ENCODE measurements at regions of chr3 and their contacts with region 1.

Region 1: DNA sequence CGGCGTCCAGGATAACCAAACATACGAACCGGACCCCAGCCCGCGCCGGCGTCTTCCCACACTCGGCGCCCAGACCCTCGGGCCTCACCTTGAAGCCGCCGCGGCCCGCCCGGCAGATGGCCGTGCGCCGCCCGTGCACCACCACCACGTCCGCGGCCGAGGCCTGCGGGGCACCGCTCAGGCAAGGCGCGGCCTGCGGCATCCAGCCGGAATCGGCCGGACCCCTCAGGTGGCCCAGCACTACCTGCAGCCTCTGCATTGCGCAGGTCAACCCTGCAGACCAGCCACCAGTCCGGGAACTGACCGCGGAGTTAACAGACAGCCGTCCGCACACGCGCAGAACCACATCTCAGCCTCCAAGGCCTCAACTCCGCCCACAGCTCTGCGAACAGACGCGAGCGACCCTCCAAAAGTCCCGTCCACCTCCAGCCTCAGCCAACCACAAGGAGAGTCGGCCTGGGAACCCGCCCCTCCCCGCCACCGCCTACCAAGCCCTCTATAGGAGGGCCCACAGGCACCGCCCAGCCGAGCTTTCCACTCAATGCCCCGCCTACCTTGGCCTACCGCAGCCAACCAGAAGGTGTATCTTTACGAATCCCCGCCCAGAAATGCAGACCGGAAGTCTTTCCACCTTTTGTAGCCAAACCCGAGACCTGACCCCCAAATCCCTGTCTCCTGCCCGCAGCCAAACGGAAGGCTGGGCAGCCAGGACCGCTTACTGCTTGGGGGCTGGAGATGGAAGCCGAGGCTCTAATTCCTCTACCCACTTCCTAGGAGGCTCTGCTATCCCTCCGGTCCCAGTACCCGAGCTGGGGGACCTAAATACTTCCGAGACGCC is at the start of gene ACAA1:
- DNase-seq: peak; percentile 97
- ATAC-seq: peak; percentile 81
- H3K4me3 ChIP-seq: peak within 1 kb of the TSS; percentile 85 to 96 (median 89)
- H3K27ac ChIP-seq: peak within 1 kb of the TSS; percentile 97
- H3K4me1 ChIP-seq: peaks cover 57% of the 10 kb centered on the region
- H3K27me3 ChIP-seq: no peaks in the 10 kb centered on the region; a peak in 1 of 5 replicates
- CTCF ChIP-seq: no peak
- EP300 ChIP-seq: no peak
- POLR2A ChIP-seq: peak in 1 of 2 experiments; percentile 94; a peak in 2 of 4 replicates
- RAD21 ChIP-seq: peak; percentile 46
- total RNA-seq, gene ACAA1: 60.8 and 107 TPM in 2 replicates

Region 2: DNA sequence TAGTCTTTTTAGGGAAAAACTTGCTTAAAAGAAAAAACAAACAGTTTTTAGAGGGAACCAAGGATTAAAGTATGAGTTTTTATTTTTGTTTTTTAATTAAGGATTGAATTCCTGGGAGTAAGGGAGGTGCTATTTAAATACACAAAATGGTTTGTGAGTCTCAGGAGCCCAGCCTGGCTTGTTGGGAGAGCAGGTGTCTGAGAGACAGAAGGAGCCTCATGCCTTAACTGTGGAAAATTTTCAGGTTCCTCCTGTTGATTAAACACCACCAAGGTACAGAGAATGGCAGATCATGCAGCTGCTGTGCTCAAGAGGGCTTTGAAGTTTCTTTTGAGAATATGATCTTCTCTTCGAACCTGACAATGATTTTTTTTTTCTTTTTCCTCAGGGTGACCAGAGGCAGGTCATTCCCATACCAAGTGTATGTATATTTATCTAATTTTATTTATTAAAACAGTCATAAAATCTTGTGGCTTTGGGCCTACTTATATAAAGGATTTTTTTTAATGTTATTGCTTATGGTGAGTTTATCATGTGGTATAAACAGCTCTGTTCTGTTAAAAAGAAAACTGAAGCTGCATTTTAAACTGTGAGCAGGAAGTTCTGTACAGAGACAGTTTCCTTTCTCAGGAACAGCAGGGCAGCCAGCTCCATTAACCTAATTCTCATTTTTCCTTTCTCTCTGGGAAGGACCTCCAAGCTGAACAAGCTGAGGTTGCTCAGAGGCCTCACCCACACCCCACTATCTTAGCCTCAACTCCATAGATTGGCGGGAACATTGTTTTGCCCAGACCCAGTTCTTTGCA is 180.1 kb before region 1 on chr3:
- CTCF ChIA-PET with region 1: no interaction called
- POLR2A ChIA-PET with region 1: no interaction called
- in situ Hi-C with region 1: no loop called
- intact Hi-C with region 1: no loop called
- DNase-seq: no peak
- ATAC-seq: no peak
- H3K4me3 ChIP-seq: no peak overlapping the region
- H3K27ac ChIP-seq: no peak overlapping the region
- H3K4me1 ChIP-seq: peaks cover 8% of the 10 kb centered on the region
- H3K27me3 ChIP-seq: no peaks in the 10 kb centered on the region
- CTCF ChIP-seq: no peak
- EP300 ChIP-seq: no peak
- POLR2A ChIP-seq: no peak
- RAD21 ChIP-seq: no peak

Region 3: DNA sequence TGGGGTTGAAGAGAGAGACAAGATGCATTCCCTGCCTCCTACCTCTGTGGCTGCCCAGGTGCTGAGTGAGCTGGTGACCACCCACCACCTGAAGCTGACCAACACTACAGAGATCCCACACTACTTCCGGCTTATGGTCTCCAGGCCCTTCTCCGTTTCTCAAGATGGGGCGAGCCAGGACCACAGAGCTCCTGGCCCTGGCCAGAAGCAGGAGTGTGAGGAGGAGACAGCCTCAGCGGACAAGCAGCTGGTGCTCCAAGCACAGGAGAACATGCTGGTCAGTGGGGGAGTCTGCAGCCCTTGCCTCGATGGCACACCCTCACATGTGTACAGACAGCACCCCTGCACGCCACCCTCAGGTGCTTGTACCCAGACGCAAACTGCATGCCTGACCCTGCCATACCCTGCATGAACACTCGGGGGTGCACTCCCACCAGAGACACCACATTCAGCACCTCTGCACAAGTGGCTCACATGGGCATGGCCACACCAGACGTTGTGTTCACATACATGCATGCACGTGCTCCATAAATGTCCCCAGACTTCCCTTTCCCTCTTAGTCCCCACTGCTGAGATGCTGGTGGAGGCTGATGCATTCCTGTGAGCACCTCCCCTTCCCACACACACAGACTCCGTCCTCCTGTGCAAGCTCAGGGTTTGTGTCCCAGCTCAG is 19.1 kb before region 1 on chr3:
- CTCF ChIA-PET with region 1: no interaction called
- POLR2A ChIA-PET with region 1: interaction called, 87 read pairs
- in situ Hi-C with region 1: no loop called
- intact Hi-C with region 1: loop called (anchors 2 kb)
- DNase-seq: peak; percentile 65
- ATAC-seq: peak; percentile 53
- H3K4me3 ChIP-seq: no peak overlapping the region
- H3K27ac ChIP-seq: peak overlapping the region; percentile 14
- H3K4me1 ChIP-seq: peaks cover 18% of the 10 kb centered on the region; the same call in 1 of the 2 replicates
- H3K27me3 ChIP-seq: peaks cover 0 to 8% of the 10 kb centered on the region in 2 experiments; a peak in 1 of 5 replicates
- CTCF ChIP-seq: peak; percentile 98
- EP300 ChIP-seq: no peak
- POLR2A ChIP-seq: peak; percentile 44 to 76; a peak in 3 of 4 replicates
- RAD21 ChIP-seq: peak; percentile 94

Region 4: GRCh38 chr3:38164966-38165680 is 28.1 kb after region 1 on chr3 and contains the start of gene OXSR1:
- CTCF ChIA-PET with region 1: no interaction called
- POLR2A ChIA-PET with region 1: interaction called, 179 read pairs
- in situ Hi-C with region 1: no loop called
- intact Hi-C with region 1: loop called (anchors 2 kb)
- DNase-seq: peak; percentile 99
- ATAC-seq: peak; percentile 93
- H3K4me3 ChIP-seq: peak within 1 kb of the TSS; percentile 86 to 97 (median 90)
- H3K27ac ChIP-seq: peak within 1 kb of the TSS; percentile 96
- H3K4me1 ChIP-seq: peaks cover 48% of the 10 kb centered on the region
- H3K27me3 ChIP-seq: no peaks in the 10 kb centered on the region; a peak in 1 of 5 replicates
- CTCF ChIP-seq: 0 out of 2 replicates have a peak, but pooled peaks have one; percentile 0
- EP300 ChIP-seq: no peak; a peak in 1 of 4 replicates
- POLR2A ChIP-seq: peak; percentile 82 to 89
- RAD21 ChIP-seq: 0 out of 2 replicates have a peak, but pooled peaks have one; percentile 8
- total RNA-seq, gene OXSR1: 32.6 and 41.1 TPM in 2 replicates

Region 5: GRCh38 chr3:38281895-38282675 is 145.1 kb after region 1 on chr3 and contains the start of gene SLC22A14:
- CTCF ChIA-PET with region 1: no interaction called
- POLR2A ChIA-PET with region 1: interaction called, 3 read pairs
- in situ Hi-C with region 1: no loop called
- intact Hi-C with region 1: loop called (anchors 1 kb)
- DNase-seq: peak; percentile 16
- ATAC-seq: peak; percentile 89
- H3K4me3 ChIP-seq: no peak within 1 kb of the TSS
- H3K27ac ChIP-seq: no peak within 1 kb of the TSS
- H3K4me1 ChIP-seq: no peaks in the 10 kb centered on the region
- H3K27me3 ChIP-seq: peaks cover 0 to 19% of the 10 kb centered on the region in 2 experiments; a peak in 3 of 5 replicates
- CTCF ChIP-seq: peak; percentile 65
- EP300 ChIP-seq: no peak
- POLR2A ChIP-seq: no peak
- RAD21 ChIP-seq: peak; percentile 25; the same call in 1 of the 2 replicates
- total RNA-seq, gene SLC22A14: not detected in 2 replicates

Measured in HepG2 (cell line).